Right ventricle myocardium inferior (tissue), 1 donor: ENCODE measurements at regions of chr5 and their contacts with region 1.

Region 1: DNA sequence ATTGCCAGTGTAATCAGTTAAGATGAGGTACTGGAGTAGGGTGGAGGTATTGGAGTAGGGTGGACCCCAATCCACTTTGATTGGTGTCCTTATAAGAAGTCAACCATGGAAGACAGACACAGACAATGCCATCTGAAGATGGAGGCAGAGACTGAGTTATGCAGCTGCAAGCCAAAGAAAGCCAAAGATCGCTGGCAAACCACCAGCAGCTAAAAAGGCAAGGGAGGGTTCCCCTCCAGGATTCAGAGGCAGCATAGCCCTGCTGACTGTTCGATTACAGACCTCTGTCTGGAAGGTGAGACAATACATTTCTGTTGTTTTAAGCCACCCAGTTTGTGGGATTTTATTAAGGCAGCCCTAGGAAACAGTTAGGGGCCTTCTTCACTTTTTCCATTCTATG is 30.5 kb upstream of the CKMT2 start:
- DNase-seq: no peak
- ATAC-seq: peak; percentile 56

Region 2: GRCh38 chr5:81045389-81045807 is 157.3 kb before region 1 on chr5:
- intact Hi-C with region 1: no loop called
- DNase-seq: no peak
- ATAC-seq: no peak

Region 3: DNA sequence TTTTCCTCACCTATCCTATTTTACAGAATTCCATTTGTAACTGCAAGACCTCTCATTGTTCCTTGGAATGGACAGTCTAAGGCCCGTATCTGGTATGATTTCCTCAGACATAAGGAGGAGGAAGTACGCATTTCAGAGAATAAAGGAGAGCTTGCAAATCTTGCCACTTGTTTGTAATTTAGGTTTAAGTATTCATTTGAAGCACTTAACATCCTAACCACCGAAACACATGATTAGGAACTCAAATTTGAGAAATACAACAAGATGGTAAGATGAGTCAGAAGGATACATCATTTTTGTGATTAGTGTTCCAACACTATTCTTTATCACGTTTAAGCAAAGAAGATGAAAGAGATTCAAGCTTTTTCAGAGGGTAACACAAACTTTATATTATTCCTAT is 94.9 kb after region 1 on chr5:
- intact Hi-C with region 1: loop called (anchors 5 kb)
- DNase-seq: no peak
- ATAC-seq: no peak